ENCODE measurements at regions of chr5 and their contacts with region 1.

Region 1: GRCh38 chr5:103139264-103139865 is 19.3 kb downstream of the PPIP5K2 start:
- DNase-seq: peak; percentile 67
- ATAC-seq: peak; percentile 97
- H3K4me3 ChIP-seq: no peak overlapping the region
- H3K27ac ChIP-seq: no peak overlapping the region
- H3K4me1 ChIP-seq: no peaks in the 10 kb centered on the region
- H3K27me3 ChIP-seq: no peaks in the 10 kb centered on the region
- CTCF ChIP-seq: peak; percentile 81 to 99 (median 90)
- POLR2A ChIP-seq: no peak
- RAD21 ChIP-seq: peak; percentile 91

Region 2: GRCh38 chr5:102536323-102536928 is 602.9 kb before region 1 on chr5:
- CTCF ChIA-PET with region 1: interaction called, 7 read pairs
- POLR2A ChIA-PET with region 1: no interaction called
- RAD21 ChIA-PET with region 1: no interaction called
- intact Hi-C with region 1: loop called (anchors 2 kb)
- DNase-seq: peak; percentile 7
- ATAC-seq: no peak
- H3K4me3 ChIP-seq: no peak overlapping the region
- H3K27ac ChIP-seq: no peak overlapping the region
- H3K4me1 ChIP-seq: no peaks in the 10 kb centered on the region
- H3K27me3 ChIP-seq: no peaks in the 10 kb centered on the region
- CTCF ChIP-seq: peak; percentile 25 to 55 (median 50); a peak in 3 of 6 replicates
- POLR2A ChIP-seq: no peak
- RAD21 ChIP-seq: peak; percentile 67

Region 3: GRCh38 chr5:102583276-102584124 is 555.9 kb before region 1 on chr5:
- CTCF ChIA-PET with region 1: interaction called, 8 read pairs
- POLR2A ChIA-PET with region 1: no interaction called
- RAD21 ChIA-PET with region 1: no interaction called
- intact Hi-C with region 1: loop called (anchors 2 kb)
- DNase-seq: peak; percentile 16
- ATAC-seq: peak; percentile 63
- H3K4me3 ChIP-seq: no peak overlapping the region
- H3K27ac ChIP-seq: no peak overlapping the region
- H3K4me1 ChIP-seq: no peaks in the 10 kb centered on the region
- H3K27me3 ChIP-seq: no peaks in the 10 kb centered on the region
- CTCF ChIP-seq: peak; percentile 30 to 98 (median 73); a peak in 5 of 6 replicates
- POLR2A ChIP-seq: no peak
- RAD21 ChIP-seq: peak; percentile 74

Region 4: DNA sequence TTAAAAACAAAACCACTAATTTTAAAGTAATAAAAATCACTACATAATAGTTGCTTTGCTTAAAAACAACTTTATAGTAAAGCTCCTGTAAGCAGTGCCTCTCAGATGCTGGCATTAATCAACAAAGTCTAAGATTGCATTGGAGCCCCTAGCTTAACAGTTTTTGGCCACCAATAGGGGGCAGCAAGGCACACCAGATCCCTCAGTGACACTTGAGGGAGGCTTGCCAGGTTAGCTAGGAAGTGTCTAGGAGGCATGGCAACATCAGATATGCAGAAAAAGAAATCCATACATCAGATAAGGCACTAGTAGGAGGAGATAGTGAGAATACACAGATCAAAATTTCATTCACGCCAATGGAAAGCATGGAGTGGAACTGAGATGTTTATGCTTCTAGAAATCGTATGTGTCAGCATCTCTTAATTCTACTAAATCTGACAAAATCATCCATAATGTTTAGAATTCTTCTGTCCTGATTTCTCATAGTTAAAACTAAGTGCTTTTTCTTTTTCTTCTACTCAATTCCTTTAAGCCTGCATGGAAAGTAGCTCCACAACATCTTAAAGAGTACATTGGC is 457.9 kb before region 1 on chr5:
- CTCF ChIA-PET with region 1: interaction called, 5 read pairs
- POLR2A ChIA-PET with region 1: no interaction called
- RAD21 ChIA-PET with region 1: no interaction called
- intact Hi-C with region 1: loop called (anchors 5 kb)
- DNase-seq: peak; percentile 73
- ATAC-seq: peak; percentile 97
- H3K4me3 ChIP-seq: no peak overlapping the region
- H3K27ac ChIP-seq: no peak overlapping the region
- H3K4me1 ChIP-seq: peaks cover 0 to 5% of the 10 kb centered on the region in 2 experiments; a peak in 2 of 4 replicates
- H3K27me3 ChIP-seq: no peaks in the 10 kb centered on the region
- CTCF ChIP-seq: peak; percentile 87 to 93 (median 90)
- POLR2A ChIP-seq: no peak
- RAD21 ChIP-seq: peak; percentile 94

Region 5: DNA sequence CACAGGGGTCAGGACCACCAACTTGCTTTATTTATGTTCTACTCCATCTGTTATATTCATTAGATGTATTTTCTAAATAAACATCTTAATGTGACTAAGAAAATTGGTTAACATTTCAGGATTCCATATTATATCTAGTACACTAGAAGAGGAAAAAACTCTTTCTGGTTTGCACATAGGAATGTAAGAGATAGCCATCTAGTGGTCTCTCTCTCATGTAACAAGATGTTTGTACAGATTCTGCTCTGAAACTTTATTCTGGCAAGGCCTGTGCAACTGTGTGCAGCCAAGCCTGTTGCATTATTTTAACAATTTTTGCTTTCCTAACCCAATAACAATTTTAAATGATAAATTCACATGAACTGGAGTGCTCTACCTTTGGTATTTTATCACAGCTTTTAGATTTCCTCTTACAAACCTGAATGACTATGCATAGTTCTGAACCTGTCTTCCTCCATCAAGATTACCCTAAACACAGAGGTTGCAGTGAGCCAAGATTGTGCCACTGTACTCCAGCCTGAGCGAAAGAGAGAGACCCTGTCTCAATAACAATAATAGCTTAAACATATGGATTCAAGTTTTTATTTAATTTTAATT is 167.6 kb before region 1 on chr5:
- CTCF ChIA-PET with region 1: interaction called, 4 read pairs
- POLR2A ChIA-PET with region 1: no interaction called
- RAD21 ChIA-PET with region 1: no interaction called
- intact Hi-C with region 1: loop called (anchors 5 kb)
- DNase-seq: peak; percentile 26
- ATAC-seq: peak; percentile 84
- H3K4me3 ChIP-seq: no peak overlapping the region
- H3K27ac ChIP-seq: peak overlapping the region; percentile 42; the same call in 1 of the 2 replicates
- H3K4me1 ChIP-seq: peaks cover 0 to 5% of the 10 kb centered on the region in 2 experiments; a peak in 1 of 4 replicates
- H3K27me3 ChIP-seq: no peaks in the 10 kb centered on the region
- CTCF ChIP-seq: peak; percentile 52 to 63 (median 59); a peak in 5 of 6 replicates
- POLR2A ChIP-seq: no peak
- RAD21 ChIP-seq: peak; percentile 81

Region 6: DNA sequence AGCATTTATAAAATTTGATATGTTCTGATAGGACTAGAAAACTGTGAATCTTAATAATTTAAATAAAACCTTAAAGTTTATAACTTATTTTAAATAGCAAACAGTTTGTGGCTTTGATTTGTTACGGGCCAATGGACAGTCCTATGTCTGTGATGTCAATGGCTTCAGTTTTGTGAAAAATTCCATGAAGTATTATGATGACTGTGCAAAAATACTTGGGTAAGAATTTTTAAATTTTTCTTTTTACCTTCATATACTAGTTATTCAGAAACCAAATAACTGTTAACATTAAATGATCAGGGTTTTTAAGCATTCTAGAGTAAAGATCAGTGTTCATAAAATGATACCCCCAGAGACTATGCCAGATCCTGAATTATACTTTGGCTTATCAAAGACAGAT is 11.8 kb after region 1 on chr5:
- CTCF ChIA-PET with region 1: no interaction called
- POLR2A ChIA-PET with region 1: no interaction called
- RAD21 ChIA-PET with region 1: no interaction called
- intact Hi-C with region 1: no loop called
- DNase-seq: no peak
- ATAC-seq: no peak
- H3K4me3 ChIP-seq: no peak overlapping the region
- H3K27ac ChIP-seq: no peak overlapping the region
- H3K4me1 ChIP-seq: no peaks in the 10 kb centered on the region
- H3K27me3 ChIP-seq: no peaks in the 10 kb centered on the region
- CTCF ChIP-seq: no peak
- POLR2A ChIP-seq: no peak
- RAD21 ChIP-seq: no peak

Region 7: GRCh38 chr5:103475629-103476240 is 336.4 kb after region 1 on chr5:
- CTCF ChIA-PET with region 1: no interaction called
- POLR2A ChIA-PET with region 1: no interaction called
- RAD21 ChIA-PET with region 1: no interaction called
- intact Hi-C with region 1: loop called (anchors 5 kb)
- DNase-seq: peak; percentile 33
- ATAC-seq: peak; percentile 85
- H3K4me3 ChIP-seq: no peak overlapping the region
- H3K27ac ChIP-seq: no peak overlapping the region
- H3K4me1 ChIP-seq: no peaks in the 10 kb centered on the region
- H3K27me3 ChIP-seq: no peaks in the 10 kb centered on the region
- CTCF ChIP-seq: peak; percentile 49 to 78 (median 64)
- POLR2A ChIP-seq: no peak
- RAD21 ChIP-seq: peak; percentile 84